Activated CD8-positive, alpha-beta memory T cell treated with anti-CD3 and anti-CD28 coated beads, Interleukin-2, amount 10 ng/mL, durations not matched to agents 7 days and 5 days (primary cell): ENCODE measurements at regions of chr6 and their contacts with region 1.

Region 1: GRCh38 chr6:137866914-137867684 is at the start of gene TNFAIP3:
- DNase-seq: peak; percentile 96
- ATAC-seq: peak; percentile 80
- H3K4me3 Mint-ChIP-seq: peak within 1 kb of the TSS; percentile 79
- H3K27ac Mint-ChIP-seq: peak within 1 kb of the TSS; percentile 93
- H3K4me1 Mint-ChIP-seq: peaks cover 42% of the 10 kb centered on the region
- H3K27me3 Mint-ChIP-seq: no peaks in the 10 kb centered on the region
- total RNA-seq, gene TNFAIP3: 86.7 to 225 TPM

Region 2: DNA sequence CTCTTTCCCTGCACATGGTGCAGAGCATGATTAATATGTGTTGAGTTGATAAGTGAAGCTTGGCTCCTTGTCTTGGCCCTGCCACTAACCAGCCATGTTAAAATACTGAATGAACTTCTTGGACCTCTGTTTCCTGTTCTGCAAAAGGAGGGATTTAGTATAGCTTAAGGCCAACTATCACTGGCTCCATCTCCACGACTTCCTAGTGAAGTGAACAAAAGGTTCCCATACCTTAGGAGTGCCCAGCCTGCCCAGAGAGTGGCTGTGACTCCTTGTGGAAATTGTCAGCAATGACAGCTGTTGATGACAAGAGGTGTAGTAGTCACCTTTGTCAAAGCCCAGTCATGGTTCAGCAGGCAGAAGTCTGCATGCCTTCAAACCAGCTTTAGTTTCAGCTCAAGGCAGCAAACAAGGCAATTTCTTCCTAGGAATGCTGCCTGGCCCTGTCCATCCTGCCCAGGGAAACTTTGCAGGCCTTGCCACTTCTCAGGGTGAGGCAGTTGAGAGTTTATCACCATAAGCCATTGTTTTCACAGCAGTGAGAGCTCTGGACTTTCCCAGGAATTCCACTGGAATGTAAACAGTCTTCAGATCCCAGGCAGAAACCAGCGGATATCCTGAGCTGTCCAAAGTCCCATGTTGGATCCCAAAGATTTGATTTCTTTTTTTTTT is 169.7 kb before region 1 on chr6:
- CTCF ChIA-PET with region 1: interaction called, 14 read pairs
- DNase-seq: no peak
- ATAC-seq: peak; percentile 32
- H3K4me3 Mint-ChIP-seq: no peak overlapping the region
- H3K27ac Mint-ChIP-seq: peak overlapping the region; percentile 47
- H3K4me1 Mint-ChIP-seq: peaks cover 57% of the 10 kb centered on the region
- H3K27me3 Mint-ChIP-seq: no peaks in the 10 kb centered on the region

Region 3: DNA sequence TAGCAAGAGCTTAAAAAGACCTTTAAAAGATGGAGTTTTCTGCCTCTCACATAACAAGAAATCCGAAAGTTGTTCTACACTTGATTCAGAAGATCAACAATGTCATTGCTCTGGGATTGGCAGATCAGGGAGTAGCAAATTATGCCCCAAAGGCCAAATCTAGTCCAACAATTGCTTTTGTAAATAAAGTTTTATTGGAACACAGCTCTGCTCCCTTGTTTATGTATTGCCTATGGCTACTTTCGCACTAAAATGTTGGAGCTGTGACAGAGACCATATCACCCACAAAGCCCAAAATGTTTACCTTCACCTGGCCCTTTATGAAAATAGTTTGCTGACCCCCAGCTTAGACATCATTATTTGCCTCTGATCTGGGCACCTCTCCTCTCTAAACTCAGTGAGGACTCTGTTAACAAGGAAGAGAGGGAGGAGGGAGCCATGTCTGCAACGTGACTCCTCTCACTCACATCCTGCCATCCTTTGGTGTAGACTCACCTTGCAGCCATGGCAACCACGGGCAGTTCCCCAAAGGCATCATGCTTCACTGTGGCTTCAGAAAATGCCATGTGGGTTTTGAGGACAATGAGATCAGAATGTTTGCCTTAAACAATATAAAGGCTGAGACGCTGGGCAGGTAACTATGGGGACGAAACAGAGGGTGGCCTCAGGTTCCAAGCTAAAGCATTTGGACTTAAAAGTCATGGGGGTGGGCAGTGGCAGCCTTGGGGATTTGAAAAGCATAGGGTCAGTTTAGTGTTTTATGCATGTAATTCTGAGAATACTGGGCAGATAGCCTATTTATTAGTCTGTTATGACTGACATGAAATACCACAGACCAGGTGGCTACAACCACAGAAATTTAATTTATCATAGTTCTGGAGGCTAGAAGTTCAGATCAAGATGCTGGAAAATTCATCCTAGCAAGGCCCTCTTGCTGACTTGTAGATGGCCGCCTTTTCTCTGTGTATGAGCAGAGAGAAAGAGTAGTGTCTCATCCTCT is 149.7 kb before region 1 on chr6:
- CTCF ChIA-PET with region 1: interaction called, 54 read pairs
- DNase-seq: peak; percentile 92
- ATAC-seq: peak; percentile 63
- H3K4me3 Mint-ChIP-seq: no peak overlapping the region
- H3K27ac Mint-ChIP-seq: peak overlapping the region; percentile 94
- H3K4me1 Mint-ChIP-seq: peaks cover 52% of the 10 kb centered on the region
- H3K27me3 Mint-ChIP-seq: no peaks in the 10 kb centered on the region

Region 4: DNA sequence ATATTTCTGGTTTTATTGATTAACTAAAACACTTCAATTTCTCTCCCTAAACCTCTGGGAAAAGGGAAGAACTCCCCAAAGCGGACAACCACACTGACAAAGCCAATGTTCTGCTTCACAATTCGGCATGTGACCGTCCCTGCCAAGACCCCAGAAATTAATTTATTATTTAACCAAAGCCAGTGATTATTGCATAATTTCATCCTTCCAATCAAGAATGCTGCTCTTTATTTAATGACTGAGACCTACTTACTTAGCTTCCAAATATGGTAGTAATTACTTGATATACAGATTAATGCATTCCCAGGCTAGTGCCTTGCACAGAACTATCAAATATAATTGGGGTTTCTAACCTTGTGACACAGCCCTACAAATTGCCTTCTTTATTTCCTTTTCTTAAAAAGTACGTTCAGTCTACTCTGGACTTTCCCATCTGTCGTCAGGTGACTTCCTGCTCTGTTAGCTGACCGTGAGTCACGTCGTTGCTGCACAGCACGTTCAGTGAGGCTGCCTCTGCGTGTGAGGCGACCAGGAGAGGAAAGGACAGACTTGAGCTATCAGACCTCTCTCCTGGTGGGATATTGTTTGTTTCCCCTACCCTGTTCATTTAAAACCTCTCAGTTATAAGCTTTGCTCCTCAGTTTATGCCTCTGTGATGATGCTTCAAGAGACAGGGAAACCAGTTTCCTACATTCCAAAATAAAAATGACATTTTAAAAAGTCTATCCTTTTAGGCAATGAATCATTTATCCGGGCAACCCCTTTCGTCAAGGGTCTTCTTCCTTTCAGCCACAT is 55.8 kb before region 1 on chr6:
- CTCF ChIA-PET with region 1: interaction called, 25 read pairs
- DNase-seq: peak; percentile 92
- ATAC-seq: peak; percentile 97
- H3K4me3 Mint-ChIP-seq: peak overlapping the region; percentile 43
- H3K27ac Mint-ChIP-seq: peak overlapping the region; percentile 92
- H3K4me1 Mint-ChIP-seq: peaks cover 42% of the 10 kb centered on the region
- H3K27me3 Mint-ChIP-seq: no peaks in the 10 kb centered on the region

Region 5: GRCh38 chr6:137878486-137879285 is 11.6 kb after region 1 on chr6:
- CTCF ChIA-PET with region 1: interaction called, 70 read pairs
- DNase-seq: no peak
- ATAC-seq: no peak
- H3K4me3 Mint-ChIP-seq: no peak overlapping the region
- H3K27ac Mint-ChIP-seq: peak overlapping the region; percentile 43
- H3K4me1 Mint-ChIP-seq: peaks cover 82% of the 10 kb centered on the region
- H3K27me3 Mint-ChIP-seq: no peaks in the 10 kb centered on the region

Region 6: GRCh38 chr6:137944793-137945498 is 77.8 kb after region 1 on chr6:
- CTCF ChIA-PET with region 1: interaction called, 273 read pairs
- DNase-seq: peak; percentile 47
- ATAC-seq: peak; percentile 73
- H3K4me3 Mint-ChIP-seq: no peak overlapping the region
- H3K27ac Mint-ChIP-seq: no peak overlapping the region
- H3K4me1 Mint-ChIP-seq: peaks cover 45% of the 10 kb centered on the region
- H3K27me3 Mint-ChIP-seq: no peaks in the 10 kb centered on the region

Region 7: GRCh38 chr6:137980777-137981176 is 113.7 kb after region 1 on chr6:
- CTCF ChIA-PET with region 1: interaction called, 62 read pairs
- DNase-seq: no peak
- ATAC-seq: no peak
- H3K4me3 Mint-ChIP-seq: no peak overlapping the region
- H3K27ac Mint-ChIP-seq: no peak overlapping the region
- H3K4me1 Mint-ChIP-seq: peaks cover 38% of the 10 kb centered on the region
- H3K27me3 Mint-ChIP-seq: no peaks in the 10 kb centered on the region